ENCODE measurements at regions of chr22 and their contacts with region 1.

Region 1: GRCh38 chr22:22348127-22348814 is 103.7 kb downstream of the VPREB1 start:
- DNase-seq: no peak
- CTCF ChIP-seq: peak; percentile 20

Region 2: GRCh38 chr22:22397277-22397870 is 49.1 kb after region 1 on chr22:
- in situ Hi-C with region 1: loop called (anchors 5 kb)
- DNase-seq: no peak
- CTCF ChIP-seq: no peak

Measured in GM13977 (cell line).